SK-N-SH (cell line): ENCODE measurements at regions of chr11 and their contacts with region 1.

Region 1: GRCh38 chr11:59171508-59172322 is at the start of gene DTX4:
- DNase-seq: peak; percentile 92
- H3K4me3 ChIP-seq: peak within 1 kb of the TSS; percentile 48 to 96
- H3K27ac ChIP-seq: no peak within 1 kb of the TSS
- H3K4me1 ChIP-seq: peaks cover 0 to 12% of the 10 kb centered on the region in 2 experiments; a peak in 1 of 4 replicates
- H3K27me3 ChIP-seq: peaks cover 48% of the 10 kb centered on the region
- CTCF ChIP-seq: peak; percentile 89
- EP300 ChIP-seq: no peak
- RAD21 ChIP-seq: peak; percentile 86
- polyA plus RNA-seq, gene DTX4: 0.02 and 0.05 TPM in 2 replicates

Region 2: GRCh38 chr11:59158206-59159068 is 13.3 kb before region 1 on chr11:
- CTCF ChIA-PET with region 1: interaction called, 36 read pairs
- POLR2A ChIA-PET with region 1: no interaction called
- DNase-seq: peak; percentile 66
- H3K4me3 ChIP-seq: peak overlapping the region in 1 of 2 experiments; percentile 32; a peak in 1 of 4 replicates
- H3K27ac ChIP-seq: no peak overlapping the region
- H3K4me1 ChIP-seq: no peaks in the 10 kb centered on the region
- H3K27me3 ChIP-seq: peaks cover 10% of the 10 kb centered on the region; the same call in 1 of the 2 replicates
- CTCF ChIP-seq: peak; percentile 88
- EP300 ChIP-seq: no peak
- RAD21 ChIP-seq: peak; percentile 88

Region 3: DNA sequence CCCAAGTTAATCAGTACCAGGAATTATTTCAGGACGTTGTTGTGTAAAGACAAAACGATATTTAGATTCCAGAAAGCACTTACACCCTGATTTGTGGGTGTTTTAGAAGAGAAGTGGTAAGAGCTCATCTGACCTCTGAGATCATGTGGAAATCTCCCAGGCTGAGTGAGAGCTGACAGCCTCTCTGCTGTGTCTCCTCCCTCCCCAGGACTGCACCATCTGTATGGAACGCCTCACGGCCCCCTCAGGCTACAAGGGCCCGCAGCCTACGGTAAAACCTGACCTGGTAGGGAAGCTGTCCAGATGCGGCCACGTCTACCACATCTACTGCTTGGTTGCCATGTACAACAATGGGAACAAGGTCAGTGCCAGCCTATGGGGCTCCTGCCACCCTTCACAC is 20.2 kb after region 1 on chr11:
- CTCF ChIA-PET with region 1: interaction called, 58 read pairs
- POLR2A ChIA-PET with region 1: interaction called, 3 read pairs
- DNase-seq: no peak
- H3K4me3 ChIP-seq: no peak overlapping the region
- H3K27ac ChIP-seq: no peak overlapping the region
- H3K4me1 ChIP-seq: no peaks in the 10 kb centered on the region
- H3K27me3 ChIP-seq: peaks cover 5% of the 10 kb centered on the region; the same call in 1 of the 2 replicates
- CTCF ChIP-seq: no peak
- EP300 ChIP-seq: no peak
- RAD21 ChIP-seq: no peak

Region 4: DNA sequence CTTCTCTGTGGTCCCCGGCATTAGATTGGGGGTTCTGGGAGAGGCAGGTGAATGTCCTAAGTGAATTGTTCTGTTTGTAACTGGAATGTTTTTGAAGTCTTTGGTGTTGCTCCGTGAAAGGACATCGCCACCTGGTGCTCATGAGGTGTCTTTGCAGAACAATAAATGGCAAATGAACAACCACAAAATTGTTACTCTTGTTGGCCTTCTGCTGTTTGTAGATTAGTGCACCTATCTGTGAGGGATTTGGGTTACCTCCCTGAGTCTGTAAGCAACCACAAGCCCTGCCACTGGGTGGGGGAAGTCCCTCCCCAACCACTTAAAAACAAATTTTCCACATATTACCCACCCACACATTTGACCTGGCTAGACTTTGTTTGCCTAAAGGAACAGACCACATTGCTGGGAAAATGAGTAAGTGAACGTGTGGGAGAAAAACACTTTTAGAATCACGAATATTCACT is 36.3 kb after region 1 on chr11:
- CTCF ChIA-PET with region 1: interaction called, 29 read pairs
- POLR2A ChIA-PET with region 1: no interaction called
- DNase-seq: peak; percentile 24
- H3K4me3 ChIP-seq: peak overlapping the region in 1 of 2 experiments; percentile 38; a peak in 1 of 4 replicates
- H3K27ac ChIP-seq: no peak overlapping the region
- H3K4me1 ChIP-seq: no peaks in the 10 kb centered on the region
- H3K27me3 ChIP-seq: peaks cover 7% of the 10 kb centered on the region; the same call in 1 of the 2 replicates
- CTCF ChIP-seq: peak; percentile 67
- EP300 ChIP-seq: no peak
- RAD21 ChIP-seq: peak; percentile 69